CD4-positive, alpha-beta T cell (primary cell): ENCODE measurements at regions of chr4 and their contacts with region 1.

Region 1: DNA sequence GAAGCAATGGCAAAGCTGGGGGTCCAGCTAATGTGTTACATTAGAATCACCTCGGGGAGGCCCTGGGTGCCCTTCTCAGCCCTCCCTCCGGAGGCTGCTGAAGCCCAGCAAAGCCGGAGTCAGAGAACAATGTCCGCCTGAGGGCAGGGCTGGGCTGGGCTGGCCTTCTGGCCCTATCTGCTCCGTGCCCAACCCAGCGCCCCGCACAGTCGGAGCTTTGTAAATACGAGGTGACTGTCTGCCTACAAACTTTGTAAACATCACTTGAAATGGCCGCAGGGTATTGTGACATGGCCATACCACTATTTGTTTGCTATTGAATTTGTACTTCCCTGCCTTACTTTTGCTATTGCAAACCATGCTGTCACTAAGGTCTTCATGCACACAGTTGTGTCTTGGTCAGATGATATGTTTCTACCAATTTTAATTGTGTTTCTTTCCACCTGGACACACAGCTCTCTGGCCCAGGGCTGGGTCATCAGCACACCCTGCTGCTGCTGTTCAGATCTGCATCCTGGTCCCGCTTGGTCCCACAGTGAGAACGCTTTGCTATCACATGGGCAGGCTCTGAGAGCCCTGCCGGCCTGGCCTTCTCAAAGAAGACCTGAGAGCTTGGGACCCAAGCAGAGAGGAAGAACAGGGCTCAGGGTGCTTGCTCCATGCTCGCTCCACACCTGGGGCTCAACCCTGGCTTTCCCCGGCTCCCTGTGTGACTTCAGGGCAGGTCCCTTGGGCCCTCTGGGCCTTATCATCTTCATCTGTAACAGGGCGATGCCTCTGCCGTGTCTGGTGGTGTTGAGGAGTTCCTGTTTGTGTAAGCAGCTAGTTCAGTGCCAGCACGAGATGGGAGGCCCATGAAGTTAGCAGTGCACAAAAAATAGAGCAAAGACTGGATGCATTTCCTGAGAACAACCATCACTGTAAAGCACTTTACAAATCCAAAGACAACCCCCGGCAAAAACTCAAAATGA is 2.3 kb downstream of the S100P start:
- DNase-seq: peak; percentile 49 to 89 (median 68)
- ATAC-seq: peak; percentile 94
- H3K4me3 ChIP-seq: peak overlapping the region; percentile 1
- H3K4me3 Mint-ChIP-seq: peak overlapping the region; percentile 39
- H3K27ac ChIP-seq: peak overlapping the region; percentile 75 to 83
- H3K27ac Mint-ChIP-seq: peak overlapping the region; percentile 89
- H3K4me1 ChIP-seq: peaks cover 92% of the 10 kb centered on the region
- H3K4me1 Mint-ChIP-seq: peaks cover 82% of the 10 kb centered on the region
- H3K27me3 ChIP-seq: no peaks in the 10 kb centered on the region
- H3K27me3 Mint-ChIP-seq: no peaks in the 10 kb centered on the region
- CTCF ChIP-seq: no peak

Region 2: DNA sequence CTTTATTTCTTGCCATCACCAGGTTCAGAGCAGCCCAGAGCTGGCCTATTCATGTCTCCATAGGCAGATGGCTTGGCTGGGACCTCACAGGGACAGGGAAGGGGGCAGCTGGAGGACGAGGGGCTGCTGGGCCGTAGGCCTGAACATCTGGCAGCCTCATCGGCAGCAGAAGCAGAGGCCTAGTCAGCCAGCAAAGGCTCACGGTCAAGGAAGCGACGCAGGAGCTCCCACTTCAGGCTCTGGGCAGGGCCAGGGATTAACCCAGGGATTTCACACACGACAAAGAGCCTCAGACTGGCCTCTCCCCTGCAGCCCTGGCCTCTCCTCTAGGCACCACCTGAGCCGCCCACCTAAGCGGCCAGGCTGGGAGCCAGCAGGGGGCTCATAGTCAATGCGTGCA is 166.9 kb before region 1 on chr4:
- CTCF ChIA-PET with region 1: no interaction called
- POLR2A ChIA-PET with region 1: no interaction called
- intact Hi-C with region 1: no loop called
- DNase-seq: no peak
- ATAC-seq: no peak
- H3K4me3 ChIP-seq: no peak overlapping the region
- H3K4me3 Mint-ChIP-seq: no peak overlapping the region
- H3K27ac ChIP-seq: no peak overlapping the region
- H3K27ac Mint-ChIP-seq: no peak overlapping the region
- H3K4me1 ChIP-seq: no peaks in the 10 kb centered on the region
- H3K4me1 Mint-ChIP-seq: no peaks in the 10 kb centered on the region
- H3K27me3 ChIP-seq: peaks cover 0 to 2% of the 10 kb centered on the region in 2 experiments
- H3K27me3 Mint-ChIP-seq: peaks cover 22% of the 10 kb centered on the region
- CTCF ChIP-seq: no peak

Region 3: DNA sequence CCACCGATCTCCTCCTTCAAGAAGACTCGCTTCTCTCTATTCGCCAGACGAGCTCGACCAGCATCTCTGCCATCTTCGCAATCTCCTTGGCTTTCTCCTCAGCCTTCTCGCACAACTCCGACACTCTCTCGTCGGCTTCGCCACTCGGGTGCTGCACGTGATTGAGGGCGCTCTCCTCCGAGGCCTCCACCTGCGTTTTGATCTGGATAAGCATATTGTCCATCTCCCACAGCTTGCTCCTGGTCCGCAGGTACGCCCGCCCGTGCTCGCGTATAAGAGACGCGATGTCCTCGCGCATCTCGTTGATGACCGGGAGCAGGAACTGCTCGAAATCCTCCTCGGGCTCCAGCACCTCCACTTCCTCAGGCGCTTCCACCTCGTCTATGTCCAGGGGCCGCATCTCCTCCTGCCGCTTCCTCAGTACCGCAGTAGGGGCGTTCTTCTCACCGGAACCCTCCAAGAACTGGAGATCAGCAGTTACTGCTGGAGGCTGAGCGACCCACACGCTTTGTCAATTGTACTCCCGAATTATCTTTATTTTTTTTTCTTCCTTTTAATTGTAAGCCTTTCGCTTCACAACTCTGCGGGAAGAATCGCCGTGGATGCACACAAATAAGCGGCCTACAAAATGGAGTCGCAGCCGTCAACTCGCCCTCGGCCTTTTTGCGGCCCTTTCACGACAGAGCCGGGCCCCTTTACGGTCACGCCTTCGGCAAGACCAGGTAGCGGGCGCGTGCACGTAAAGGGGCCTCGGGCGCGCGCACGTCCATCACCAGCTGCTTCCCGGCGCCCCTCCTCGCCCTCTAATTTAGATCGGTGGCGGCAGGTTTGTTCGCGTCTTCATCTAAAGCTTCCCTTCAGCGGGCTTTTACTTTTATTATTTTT is 13.5 kb after region 1 on chr4 and contains the start of gene MRFAP1L1:
- CTCF ChIA-PET with region 1: interaction called, 5 read pairs
- POLR2A ChIA-PET with region 1: interaction called, 58 read pairs
- intact Hi-C with region 1: loop called in 1 of 2 experiments (anchors 1 kb)
- DNase-seq: peak; percentile 94 to 98 (median 96)
- ATAC-seq: peak; percentile 87
- H3K4me3 ChIP-seq: peak within 1 kb of the TSS; percentile 74
- H3K4me3 Mint-ChIP-seq: peak within 1 kb of the TSS; percentile 99
- H3K27ac ChIP-seq: peak within 1 kb of the TSS; percentile 79 to 85
- H3K27ac Mint-ChIP-seq: peak within 1 kb of the TSS; percentile 97
- H3K4me1 ChIP-seq: peaks cover 40% of the 10 kb centered on the region
- H3K4me1 Mint-ChIP-seq: peaks cover 69% of the 10 kb centered on the region
- H3K27me3 ChIP-seq: no peaks in the 10 kb centered on the region
- H3K27me3 Mint-ChIP-seq: no peaks in the 10 kb centered on the region
- CTCF ChIP-seq: no peak
- total RNA-seq, gene MRFAP1L1: 26.6 to 27.0 TPM

Region 4: GRCh38 chr4:6716018-6716911 is 20.3 kb after region 1 on chr4 and contains the start of gene BLOC1S4:
- CTCF ChIA-PET with region 1: interaction called, 6 read pairs
- POLR2A ChIA-PET with region 1: interaction called, 38 read pairs
- intact Hi-C with region 1: loop called in 1 of 2 experiments (anchors 2 kb)
- DNase-seq: peak; percentile 79 to 98 (median 88)
- ATAC-seq: peak; percentile 79
- H3K4me3 ChIP-seq: peak within 1 kb of the TSS; percentile 95
- H3K4me3 Mint-ChIP-seq: peak within 1 kb of the TSS; percentile 99
- H3K27ac ChIP-seq: peak within 1 kb of the TSS; percentile 82 to 85
- H3K27ac Mint-ChIP-seq: peak within 1 kb of the TSS; percentile 99
- H3K4me1 ChIP-seq: peaks cover 31% of the 10 kb centered on the region
- H3K4me1 Mint-ChIP-seq: peaks cover 39% of the 10 kb centered on the region
- H3K27me3 ChIP-seq: no peaks in the 10 kb centered on the region
- H3K27me3 Mint-ChIP-seq: no peaks in the 10 kb centered on the region
- CTCF ChIP-seq: no peak
- total RNA-seq, gene BLOC1S4: 24.6 to 27.6 TPM